ENCODE measurements at regions of chr18 and their contacts with region 1.

Region 1: GRCh38 chr18:54357660-54358494 is at the starts of genes C18orf54 and STARD6:
- DNase-seq: peak; percentile 92
- ATAC-seq: peak; percentile 97
- H3K4me3 Mint-ChIP-seq: peak within 1 kb of the TSS; percentile 99
- H3K27ac Mint-ChIP-seq: peak within 1 kb of the TSS; percentile 97
- H3K4me1 Mint-ChIP-seq: peaks cover 16% of the 10 kb centered on the region
- H3K27me3 Mint-ChIP-seq: peaks cover 4% of the 10 kb centered on the region
- total RNA-seq, gene C18orf54: 8.5 to 9.9 TPM
- total RNA-seq, gene STARD6: 0.23 TPM in 1 of 2 experiments, not detected in the other

Region 2: DNA sequence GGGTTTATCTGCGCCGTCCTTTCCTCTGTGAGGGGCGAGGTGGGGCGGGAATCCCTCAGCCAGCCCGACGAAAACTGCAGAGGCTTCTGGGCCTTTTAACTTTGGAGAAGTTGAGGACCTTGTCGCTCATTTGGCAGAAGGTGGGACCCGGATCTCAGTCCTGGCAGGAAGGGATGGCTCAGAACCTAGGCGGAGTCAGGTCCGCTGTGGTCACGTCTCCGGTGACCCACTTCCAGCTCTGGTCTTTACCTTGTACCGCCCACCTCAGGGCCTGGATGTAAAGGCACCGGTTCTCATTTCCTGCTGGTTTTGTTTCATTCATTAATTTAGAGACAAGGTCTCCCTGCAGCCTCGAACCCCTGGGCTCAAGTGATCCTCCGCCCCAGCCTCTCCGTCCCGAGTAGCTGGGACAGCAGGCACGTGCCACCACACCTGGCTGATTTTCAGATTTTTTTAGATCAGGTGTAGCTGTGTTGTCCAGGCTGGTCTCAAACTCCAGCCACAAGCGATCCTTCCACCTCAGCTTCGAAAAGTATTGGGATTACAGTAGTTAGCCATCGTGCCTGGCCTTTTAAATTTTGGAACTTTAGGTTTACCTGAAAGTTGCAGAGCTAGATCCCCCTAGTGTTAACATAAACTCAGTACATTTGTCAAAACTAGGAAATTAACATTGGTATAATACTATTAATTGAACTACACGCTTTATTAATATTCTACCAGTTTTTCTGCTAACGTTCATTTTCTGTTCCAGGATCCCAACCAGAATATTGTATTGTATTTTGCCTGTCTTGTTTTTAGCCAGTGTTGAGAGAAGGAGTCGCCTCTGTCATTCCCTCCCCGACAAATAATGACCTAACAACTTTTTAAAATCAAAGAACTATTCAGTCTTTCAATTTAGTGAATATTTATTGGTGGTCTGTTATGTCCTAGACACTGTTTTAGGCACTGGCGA is 87.7 kb before region 1 on chr18:
- CTCF ChIA-PET with region 1: interaction called, 3 read pairs
- POLR2A ChIA-PET with region 1: interaction called, 3 read pairs
- intact Hi-C with region 1: loop called (anchors 1 kb)
- DNase-seq: peak; percentile 75
- ATAC-seq: peak; percentile 63
- H3K4me3 Mint-ChIP-seq: peak overlapping the region; percentile 78
- H3K27ac Mint-ChIP-seq: peak overlapping the region; percentile 99
- H3K4me1 Mint-ChIP-seq: peaks cover 28% of the 10 kb centered on the region
- H3K27me3 Mint-ChIP-seq: no peaks in the 10 kb centered on the region

Region 3: GRCh38 chr18:54392543-54393023 is 34.7 kb after region 1 on chr18:
- CTCF ChIA-PET with region 1: interaction called, 13 read pairs
- POLR2A ChIA-PET with region 1: no interaction called
- intact Hi-C with region 1: no loop called
- DNase-seq: no peak
- ATAC-seq: peak; percentile 59
- H3K4me3 Mint-ChIP-seq: no peak overlapping the region
- H3K27ac Mint-ChIP-seq: no peak overlapping the region
- H3K4me1 Mint-ChIP-seq: peaks cover 6% of the 10 kb centered on the region
- H3K27me3 Mint-ChIP-seq: peaks cover 6% of the 10 kb centered on the region